Activated CD4-positive, alpha-beta T cell treated with anti-CD3 and anti-CD28 coated beads, Interleukin-2, amount 10 ng/mL, durations not matched to agents 24 days and 14 days (primary cell): ENCODE measurements at regions of chr1 and their contacts with region 1.

Region 1: DNA sequence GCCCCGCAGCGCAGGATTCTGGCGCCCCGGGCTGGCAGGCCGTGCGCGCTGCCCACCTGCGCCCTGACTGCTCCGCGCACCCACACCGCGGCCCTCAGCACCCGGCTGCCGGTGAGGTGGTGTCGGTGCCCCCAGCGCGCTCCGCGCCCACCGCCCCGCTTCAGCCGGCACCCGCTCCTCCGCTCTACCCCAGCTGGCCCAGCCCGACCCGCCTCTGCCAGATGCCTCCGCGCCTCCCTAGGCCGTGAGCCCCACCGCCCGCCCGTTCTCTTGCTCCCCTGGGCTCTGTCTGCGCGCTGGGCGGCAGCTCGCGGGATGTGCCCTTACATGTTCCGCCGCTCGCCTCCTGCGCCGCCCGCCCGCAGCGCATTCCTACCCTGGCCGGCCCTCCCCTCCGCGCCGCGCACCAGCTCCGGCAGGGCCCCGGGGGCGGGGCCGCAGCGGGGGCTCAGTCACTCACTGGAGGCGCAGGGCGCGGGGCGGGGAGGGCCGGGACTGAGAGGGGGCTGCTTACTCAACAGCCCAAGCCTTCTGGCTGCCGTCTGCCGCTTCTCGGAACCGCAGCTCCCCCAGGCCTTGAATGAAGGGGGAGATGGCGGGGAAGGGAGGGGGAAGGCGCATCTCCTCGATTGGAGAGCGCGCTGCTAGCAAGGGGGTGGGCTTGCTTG is at the start of gene PHLDA3:
- DNase-seq: peak; percentile 92
- H3K4me3 Mint-ChIP-seq: peak within 1 kb of the TSS; percentile 82
- H3K27ac Mint-ChIP-seq: peak within 1 kb of the TSS; percentile 56
- H3K4me1 Mint-ChIP-seq: peaks cover 13% of the 10 kb centered on the region
- H3K27me3 Mint-ChIP-seq: peaks cover 30% of the 10 kb centered on the region
- total RNA-seq, gene PHLDA3: 11.7 and 12.0 TPM in 2 replicates

Region 2: GRCh38 chr1:201447911-201448871 is 20.8 kb before region 1 on chr1:
- intact Hi-C with region 1: loop called (anchors 1 kb)
- DNase-seq: peak; percentile 85
- H3K4me3 Mint-ChIP-seq: no peak overlapping the region
- H3K27ac Mint-ChIP-seq: no peak overlapping the region
- H3K4me1 Mint-ChIP-seq: peaks cover 30% of the 10 kb centered on the region
- H3K27me3 Mint-ChIP-seq: peaks cover 22% of the 10 kb centered on the region

Region 3: DNA sequence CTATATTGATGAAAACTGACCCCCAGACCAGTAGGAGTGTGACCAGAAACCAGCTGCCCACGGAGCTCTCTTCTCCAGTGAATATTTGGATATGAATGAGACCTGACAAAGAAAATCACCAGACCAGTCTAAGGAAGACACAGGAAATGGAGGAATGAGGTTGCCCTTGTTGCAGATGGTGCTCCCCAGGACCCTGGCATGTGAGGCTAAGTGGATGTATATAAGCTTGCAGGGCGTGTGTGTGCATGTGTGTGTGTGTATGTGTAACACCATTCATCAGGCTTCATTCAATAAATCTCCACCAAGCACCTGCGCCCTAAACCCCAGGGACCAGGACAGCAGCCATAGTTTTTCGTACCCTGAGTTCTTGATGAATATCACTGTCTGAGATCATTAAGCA is 14.4 kb before region 1 on chr1:
- intact Hi-C with region 1: loop called (anchors 1 kb)
- DNase-seq: no peak
- H3K4me3 Mint-ChIP-seq: no peak overlapping the region
- H3K27ac Mint-ChIP-seq: no peak overlapping the region
- H3K4me1 Mint-ChIP-seq: peaks cover 25% of the 10 kb centered on the region
- H3K27me3 Mint-ChIP-seq: peaks cover 18% of the 10 kb centered on the region

Region 4: DNA sequence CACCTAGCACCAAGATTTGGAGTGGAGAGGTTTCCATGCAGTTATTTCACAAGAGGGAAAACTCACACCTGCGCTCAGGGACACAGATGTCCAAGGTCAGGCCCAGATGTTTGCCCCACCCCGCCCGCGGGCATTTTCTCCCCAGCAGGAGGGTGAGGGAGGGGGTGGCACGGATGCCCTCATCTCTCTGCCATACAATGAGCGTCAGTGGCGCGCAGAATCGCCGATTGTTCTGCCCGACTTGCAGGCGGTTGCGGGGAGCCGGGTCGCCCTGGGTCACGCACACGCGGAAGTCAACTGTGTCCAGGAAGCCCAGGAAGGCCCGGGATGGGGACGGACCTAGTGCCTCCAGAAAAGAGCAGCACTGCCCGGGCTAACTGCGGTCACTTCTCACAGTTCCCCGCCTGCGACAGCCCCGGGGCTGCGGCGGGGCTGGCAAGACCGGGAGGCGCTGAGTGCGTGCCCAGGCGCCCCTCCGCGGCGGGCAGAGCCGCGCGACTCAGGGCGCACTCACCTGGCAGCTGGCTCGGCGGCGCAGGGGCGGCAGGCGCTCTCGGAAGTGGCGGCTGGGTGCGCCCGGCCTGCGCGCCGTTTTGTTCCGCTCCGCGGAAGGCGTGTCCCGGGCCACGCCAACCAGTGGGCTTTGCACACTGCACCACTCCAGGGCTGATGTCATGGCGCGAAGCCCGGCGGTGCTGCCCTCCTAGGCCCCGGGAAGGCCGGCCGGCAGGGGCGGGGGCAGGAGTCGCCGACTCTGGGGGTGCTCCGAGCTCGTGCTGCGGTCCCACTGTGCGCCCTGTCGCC is 37.8 kb after region 1 on chr1 and contains the start of gene CSRP1:
- intact Hi-C with region 1: loop called (anchors 2 kb)
- DNase-seq: peak; percentile 95
- H3K4me3 Mint-ChIP-seq: peak within 1 kb of the TSS; percentile 94
- H3K27ac Mint-ChIP-seq: peak within 1 kb of the TSS; percentile 91
- H3K4me1 Mint-ChIP-seq: peaks cover 39% of the 10 kb centered on the region
- H3K27me3 Mint-ChIP-seq: no peaks in the 10 kb centered on the region
- total RNA-seq, gene CSRP1: 59.0 and 60.6 TPM in 2 replicates

Region 5: DNA sequence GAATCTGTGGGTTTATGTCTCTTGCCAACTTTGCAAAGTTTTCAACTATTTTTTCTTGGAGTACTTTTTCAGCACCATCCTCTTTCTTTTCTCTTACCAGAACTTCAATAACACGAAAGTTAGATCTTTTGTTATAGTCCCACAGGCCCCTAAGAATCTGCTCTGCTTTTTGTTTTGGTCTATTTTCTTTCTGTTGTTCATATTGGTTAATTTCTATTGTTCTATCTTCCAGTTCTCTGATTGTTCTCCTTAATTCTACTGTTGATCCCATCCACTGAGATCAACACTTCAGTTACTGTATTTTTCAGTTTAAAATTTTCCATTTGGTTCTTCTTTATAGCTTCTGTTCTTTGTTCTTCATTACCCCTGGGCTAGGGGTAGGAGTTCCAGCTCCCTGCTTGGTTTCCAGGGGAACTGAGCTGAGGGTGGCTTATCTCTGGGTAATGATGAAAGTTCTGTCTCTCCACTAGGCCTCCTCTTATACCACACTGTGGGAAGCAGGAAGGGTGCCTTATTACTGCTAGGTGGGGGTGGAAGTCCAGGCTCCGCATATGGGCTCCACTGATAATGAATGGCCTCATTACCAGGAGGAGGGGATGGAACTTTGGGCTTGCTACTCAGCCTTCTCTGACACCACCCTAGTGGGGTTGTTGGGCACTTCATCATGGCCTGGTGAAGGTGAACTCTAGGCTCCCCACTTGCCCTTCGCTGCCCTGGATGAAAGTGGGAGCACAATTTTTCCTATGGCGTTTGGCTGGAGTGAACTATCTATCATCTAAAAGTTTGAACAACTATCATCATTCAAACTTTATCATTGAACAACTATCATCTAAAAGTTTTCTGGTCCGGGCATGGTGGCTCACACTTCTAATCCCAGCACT is 109.3 kb after region 1 on chr1:
- intact Hi-C with region 1: no loop called
- DNase-seq: no peak
- H3K4me3 Mint-ChIP-seq: no peak overlapping the region
- H3K27ac Mint-ChIP-seq: no peak overlapping the region
- H3K4me1 Mint-ChIP-seq: no peaks in the 10 kb centered on the region
- H3K27me3 Mint-ChIP-seq: peaks cover 5% of the 10 kb centered on the region